Left lung (tissue), 14 donors: ENCODE measurements at regions of chr13 and their contacts with region 1.

Region 1: DNA sequence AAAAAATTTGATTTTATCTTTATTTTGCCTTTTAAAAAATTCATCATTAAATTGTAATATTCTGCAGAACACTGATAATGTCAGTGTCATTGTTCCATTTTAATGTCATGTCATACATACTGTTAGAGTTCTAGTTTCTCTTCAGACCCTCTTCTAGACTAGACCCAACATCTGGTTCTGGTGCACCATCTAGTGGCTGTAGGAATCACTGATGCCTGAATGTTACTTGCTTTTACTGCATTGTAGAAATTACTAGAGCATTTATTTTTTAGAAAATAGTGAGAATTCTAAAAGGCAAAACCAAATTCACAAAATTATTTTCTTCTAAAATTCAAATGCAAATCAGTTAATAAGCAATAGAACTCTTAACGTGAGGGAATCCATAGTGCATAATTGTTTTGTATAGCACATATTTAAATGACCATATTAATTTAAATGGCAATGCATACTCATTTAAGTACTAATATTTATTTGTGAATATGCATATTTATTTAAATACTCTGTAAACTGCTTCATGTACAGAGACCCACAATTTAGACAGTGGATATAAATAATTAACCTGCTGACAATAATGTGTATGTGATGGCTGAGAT is 425.7 kb downstream of the KLF12 start:
- DNase-seq: peak in 2 of 4 donors; percentile 49 to 77
- ATAC-seq: peak; percentile 85
- H3K4me3 ChIP-seq: no peak overlapping the region
- H3K27ac ChIP-seq: no peak overlapping the region
- H3K4me1 ChIP-seq: no peaks in the 10 kb centered on the region
- H3K27me3 ChIP-seq: no peaks in the 10 kb centered on the region
- CTCF ChIP-seq: peak; percentile 62 to 66

Region 2: DNA sequence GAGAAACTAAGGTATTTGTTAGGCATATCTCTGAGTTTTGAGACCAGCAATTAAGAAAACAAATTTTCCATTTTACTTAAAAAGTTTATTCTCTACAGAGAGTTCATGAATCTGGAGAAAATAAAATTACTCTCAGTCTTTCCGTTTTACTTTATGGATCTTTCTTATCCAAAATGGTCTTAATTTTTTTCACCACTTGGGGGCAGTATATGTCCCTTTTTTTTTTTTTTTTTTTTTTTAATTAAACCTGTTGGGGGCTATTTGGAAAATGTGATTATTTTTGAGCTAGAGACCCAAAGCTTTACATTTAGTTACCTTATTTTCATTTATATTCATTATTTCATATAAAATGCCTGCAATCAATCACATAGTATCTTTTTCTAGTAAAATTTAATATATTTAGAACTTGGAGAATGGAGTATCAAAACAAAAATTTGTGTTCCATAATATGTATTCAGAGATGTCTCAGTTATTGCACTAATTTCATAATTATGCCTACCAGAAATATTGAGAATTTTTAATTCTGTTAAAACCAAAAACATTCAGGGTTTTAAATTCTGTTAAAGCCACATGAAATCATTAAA is 899.5 kb before region 1 on chr13:
- intact Hi-C with region 1: loop called in 1 of 2 experiments (anchors 10 kb)
- DNase-seq: no peak
- ATAC-seq: peak; percentile 39
- H3K4me3 ChIP-seq: no peak overlapping the region
- H3K27ac ChIP-seq: no peak overlapping the region
- H3K4me1 ChIP-seq: peaks cover 0 to 9% of the 10 kb centered on the region in 2 donors
- H3K27me3 ChIP-seq: no peaks in the 10 kb centered on the region
- CTCF ChIP-seq: peak; percentile 50 to 63

Region 3: DNA sequence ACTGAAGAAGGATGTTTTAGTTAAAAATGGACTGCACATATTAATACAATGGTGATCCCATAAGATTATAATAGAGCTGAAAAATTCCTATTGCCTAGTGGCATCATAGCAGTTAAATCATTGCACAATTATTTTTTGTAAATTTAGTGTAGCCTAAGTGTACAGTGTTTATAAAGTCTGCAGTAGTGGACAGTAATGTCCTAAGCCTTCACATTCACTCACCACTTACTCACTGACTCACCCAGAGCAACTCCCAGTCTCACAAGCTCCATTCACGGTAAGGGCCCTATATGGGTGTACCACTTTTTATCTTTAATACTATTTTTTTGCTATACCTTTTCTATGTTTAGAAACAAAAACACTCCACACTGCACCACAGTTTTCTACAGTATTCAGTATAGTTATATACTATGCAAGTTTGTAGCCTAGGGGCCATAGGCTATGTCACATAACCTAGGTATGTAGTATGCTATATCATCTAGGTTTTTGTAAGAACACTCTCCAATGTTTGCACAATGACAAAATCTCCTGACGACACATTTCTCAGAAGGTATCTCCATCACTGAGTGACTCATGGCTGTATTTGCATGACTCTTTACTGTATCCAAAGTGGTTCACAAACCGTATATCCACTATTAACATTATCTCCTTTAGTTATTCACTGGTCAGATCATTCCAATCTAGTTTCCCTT is 110.3 kb before region 1 on chr13:
- intact Hi-C with region 1: no loop called
- DNase-seq: no peak
- ATAC-seq: peak; percentile 83
- H3K4me3 ChIP-seq: no peak overlapping the region
- H3K27ac ChIP-seq: no peak overlapping the region
- H3K4me1 ChIP-seq: no peaks in the 10 kb centered on the region
- H3K27me3 ChIP-seq: no peaks in the 10 kb centered on the region
- CTCF ChIP-seq: no peak

Region 4: DNA sequence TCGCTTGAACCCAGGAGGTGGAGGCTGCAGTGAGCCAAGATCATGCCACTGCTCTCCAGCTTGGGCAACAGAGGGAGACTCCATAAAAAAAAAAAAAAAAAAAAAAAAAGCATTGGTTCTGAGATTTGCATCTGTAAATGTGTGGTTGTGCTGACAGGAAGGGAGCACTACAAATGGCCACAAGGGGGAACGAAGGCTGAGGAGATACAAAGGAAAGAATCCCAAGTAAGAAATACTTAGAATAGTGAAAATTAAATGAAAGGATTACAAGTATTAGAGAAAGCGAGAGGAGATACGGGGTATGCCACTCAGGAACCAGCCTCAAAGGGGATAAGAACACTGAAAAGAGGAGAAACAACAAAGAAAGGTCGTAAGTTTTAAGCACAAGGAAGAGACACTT is 140.8 kb after region 1 on chr13:
- intact Hi-C with region 1: no loop called
- DNase-seq: no peak
- ATAC-seq: no peak
- H3K4me3 ChIP-seq: no peak overlapping the region
- H3K27ac ChIP-seq: no peak overlapping the region
- H3K4me1 ChIP-seq: no peaks in the 10 kb centered on the region
- H3K27me3 ChIP-seq: no peaks in the 10 kb centered on the region
- CTCF ChIP-seq: no peak